HCT116 (cell line): ENCODE measurements at regions of chr10 and their contacts with region 1.

Region 1: GRCh38 chr10:52308251-52309031 is 5.6 kb upstream of the DKK1 start:
- DNase-seq: no peak
- ATAC-seq: peak; percentile 83
- H3K4me3 ChIP-seq: no peak overlapping the region
- H3K27ac ChIP-seq: no peak overlapping the region
- H3K4me1 ChIP-seq: peaks cover 21 to 41% of the 10 kb centered on the region in 2 experiments; a peak in 3 of 4 replicates
- H3K27me3 ChIP-seq: no peaks in the 10 kb centered on the region
- CTCF ChIP-seq: peak; percentile 39 to 83 (median 75)
- POLR2A ChIP-seq: no peak
- RAD21 ChIP-seq: peak; percentile 89

Region 2: GRCh38 chr10:52258799-52259425 is 49.5 kb before region 1 on chr10:
- CTCF ChIA-PET with region 1: no interaction called
- POLR2A ChIA-PET with region 1: no interaction called
- RAD21 ChIA-PET with region 1: no interaction called
- intact Hi-C with region 1: no loop called
- DNase-seq: no peak
- ATAC-seq: no peak
- H3K4me3 ChIP-seq: no peak overlapping the region
- H3K27ac ChIP-seq: no peak overlapping the region
- H3K4me1 ChIP-seq: peaks cover 0 to 17% of the 10 kb centered on the region in 2 experiments; a peak in 3 of 4 replicates
- H3K27me3 ChIP-seq: no peaks in the 10 kb centered on the region
- CTCF ChIP-seq: no peak
- POLR2A ChIP-seq: no peak
- RAD21 ChIP-seq: no peak

Region 3: DNA sequence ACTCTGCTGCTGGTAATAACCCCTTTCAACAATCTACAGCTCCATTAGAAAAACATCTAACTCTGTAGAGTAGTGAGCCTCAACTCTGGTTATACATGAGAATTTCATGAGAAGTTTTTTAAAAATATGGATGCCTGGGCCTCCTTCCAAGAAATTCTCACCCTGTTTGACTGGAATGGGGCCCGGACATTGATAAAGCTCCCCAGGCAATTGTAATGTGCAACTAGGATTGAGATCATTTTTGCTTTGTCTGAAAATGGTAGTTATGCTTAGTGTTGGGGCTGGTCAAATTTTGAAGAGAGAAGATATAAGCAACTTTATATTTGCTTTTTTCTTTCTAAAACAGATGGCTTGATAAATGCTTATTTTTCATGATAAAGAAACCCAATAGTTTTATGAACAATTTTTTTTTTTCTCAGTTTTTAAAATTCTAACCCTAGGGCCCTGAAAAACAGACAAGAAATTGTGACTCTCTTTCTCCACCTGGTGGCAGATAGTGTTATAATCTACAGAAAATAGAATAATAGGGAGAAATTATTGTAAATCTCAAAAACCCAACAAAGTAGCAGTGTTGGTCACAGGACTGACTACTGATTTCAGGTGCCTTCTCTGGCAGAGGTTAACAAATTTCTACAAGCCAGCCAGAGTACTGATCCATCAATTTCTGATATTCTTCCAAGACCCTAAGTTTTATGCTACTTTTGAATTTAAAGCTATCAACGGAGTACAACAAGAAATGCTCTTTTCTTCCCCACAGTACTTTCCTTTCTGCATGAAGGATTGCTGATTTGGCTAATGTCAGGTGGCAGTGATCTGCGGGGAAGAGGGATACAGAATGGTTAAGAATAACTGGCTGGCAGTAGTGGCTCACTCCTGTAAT is 180.4 kb after region 1 on chr10:
- CTCF ChIA-PET with region 1: interaction called, 55 read pairs
- POLR2A ChIA-PET with region 1: interaction called, 33 read pairs
- RAD21 ChIA-PET with region 1: interaction called, 5 to 10 read pairs
- intact Hi-C with region 1: loop called (anchors 1 kb)
- DNase-seq: no peak
- ATAC-seq: peak; percentile 61; the same call in 1 of the 2 replicates
- H3K4me3 ChIP-seq: no peak overlapping the region
- H3K27ac ChIP-seq: peak overlapping the region; percentile 62; the same call in 1 of the 2 replicates
- H3K4me1 ChIP-seq: peaks cover 18 to 48% of the 10 kb centered on the region in 2 experiments
- H3K27me3 ChIP-seq: no peaks in the 10 kb centered on the region
- CTCF ChIP-seq: peak; percentile 30 to 66 (median 63); a peak in 4 of 6 replicates
- POLR2A ChIP-seq: no peak
- RAD21 ChIP-seq: peak; percentile 71

Region 4: GRCh38 chr10:52502237-52502636 is 193.8 kb after region 1 on chr10:
- CTCF ChIA-PET with region 1: no interaction called
- POLR2A ChIA-PET with region 1: no interaction called
- RAD21 ChIA-PET with region 1: no interaction called
- intact Hi-C with region 1: no loop called
- DNase-seq: no peak
- ATAC-seq: no peak
- H3K4me3 ChIP-seq: no peak overlapping the region
- H3K27ac ChIP-seq: no peak overlapping the region
- H3K4me1 ChIP-seq: no peaks in the 10 kb centered on the region
- H3K27me3 ChIP-seq: no peaks in the 10 kb centered on the region
- CTCF ChIP-seq: no peak
- POLR2A ChIP-seq: no peak
- RAD21 ChIP-seq: no peak

Region 5: DNA sequence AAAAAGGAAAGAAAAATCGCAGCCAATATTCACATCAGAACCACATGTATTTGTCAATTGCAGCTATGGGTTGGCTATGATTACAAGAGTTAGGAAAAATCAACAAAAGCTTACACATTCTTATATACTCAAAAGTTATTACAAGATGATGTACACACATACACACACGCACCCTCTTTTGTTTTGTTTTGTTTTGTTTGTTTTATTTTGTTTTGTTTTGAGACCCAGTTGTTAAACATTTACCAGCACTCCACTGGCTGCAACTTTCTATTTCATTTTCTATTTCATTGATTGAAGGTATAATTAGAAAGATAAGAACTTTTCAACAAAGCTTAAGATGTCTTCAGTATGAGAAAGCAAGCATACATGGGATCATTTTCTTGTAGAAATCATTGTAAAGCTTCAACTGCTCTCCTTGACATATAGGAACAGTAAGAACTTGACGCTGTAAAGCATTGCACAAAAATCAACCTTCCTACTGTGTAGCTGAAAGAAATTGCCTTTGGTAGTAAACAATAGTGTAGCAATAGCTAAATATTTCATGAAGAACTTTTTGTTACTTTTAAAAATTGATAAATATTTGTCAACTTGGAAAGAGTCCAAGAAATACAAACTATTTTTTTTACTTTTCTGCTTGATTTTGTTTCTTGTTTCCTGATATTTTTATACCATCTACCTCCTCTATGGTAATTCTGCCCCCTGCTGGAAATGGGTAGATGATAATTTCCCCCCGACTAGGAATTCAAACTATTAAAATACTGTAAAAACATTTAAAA is 258.2 kb after region 1 on chr10:
- CTCF ChIA-PET with region 1: interaction called, 60 read pairs
- POLR2A ChIA-PET with region 1: interaction called, 3 read pairs
- RAD21 ChIA-PET with region 1: interaction called, 6 read pairs
- intact Hi-C with region 1: loop called (anchors 1 kb)
- DNase-seq: peak; percentile 35
- ATAC-seq: 0 out of 2 replicates have a peak, but pooled peaks have one; percentile 60
- H3K4me3 ChIP-seq: no peak overlapping the region
- H3K27ac ChIP-seq: peak overlapping the region; percentile 2; the same call in 1 of the 2 replicates
- H3K4me1 ChIP-seq: peaks cover 3 to 5% of the 10 kb centered on the region in 2 experiments; a peak in 3 of 4 replicates
- H3K27me3 ChIP-seq: no peaks in the 10 kb centered on the region
- CTCF ChIP-seq: peak; percentile 48 to 75 (median 58)
- POLR2A ChIP-seq: no peak
- RAD21 ChIP-seq: peak; percentile 77

Region 6: GRCh38 chr10:52644373-52645186 is 336.1 kb after region 1 on chr10:
- CTCF ChIA-PET with region 1: interaction called, 9 read pairs
- POLR2A ChIA-PET with region 1: no interaction called
- RAD21 ChIA-PET with region 1: interaction called in 1 of 2 experiments, 3 read pairs
- intact Hi-C with region 1: loop called (anchors 2 kb)
- DNase-seq: peak; percentile 51
- ATAC-seq: peak; percentile 86
- H3K4me3 ChIP-seq: no peak overlapping the region
- H3K27ac ChIP-seq: no peak overlapping the region
- H3K4me1 ChIP-seq: no peaks in the 10 kb centered on the region
- H3K27me3 ChIP-seq: no peaks in the 10 kb centered on the region
- CTCF ChIP-seq: peak; percentile 68 to 89 (median 84)
- POLR2A ChIP-seq: no peak
- RAD21 ChIP-seq: peak; percentile 88

Region 7: DNA sequence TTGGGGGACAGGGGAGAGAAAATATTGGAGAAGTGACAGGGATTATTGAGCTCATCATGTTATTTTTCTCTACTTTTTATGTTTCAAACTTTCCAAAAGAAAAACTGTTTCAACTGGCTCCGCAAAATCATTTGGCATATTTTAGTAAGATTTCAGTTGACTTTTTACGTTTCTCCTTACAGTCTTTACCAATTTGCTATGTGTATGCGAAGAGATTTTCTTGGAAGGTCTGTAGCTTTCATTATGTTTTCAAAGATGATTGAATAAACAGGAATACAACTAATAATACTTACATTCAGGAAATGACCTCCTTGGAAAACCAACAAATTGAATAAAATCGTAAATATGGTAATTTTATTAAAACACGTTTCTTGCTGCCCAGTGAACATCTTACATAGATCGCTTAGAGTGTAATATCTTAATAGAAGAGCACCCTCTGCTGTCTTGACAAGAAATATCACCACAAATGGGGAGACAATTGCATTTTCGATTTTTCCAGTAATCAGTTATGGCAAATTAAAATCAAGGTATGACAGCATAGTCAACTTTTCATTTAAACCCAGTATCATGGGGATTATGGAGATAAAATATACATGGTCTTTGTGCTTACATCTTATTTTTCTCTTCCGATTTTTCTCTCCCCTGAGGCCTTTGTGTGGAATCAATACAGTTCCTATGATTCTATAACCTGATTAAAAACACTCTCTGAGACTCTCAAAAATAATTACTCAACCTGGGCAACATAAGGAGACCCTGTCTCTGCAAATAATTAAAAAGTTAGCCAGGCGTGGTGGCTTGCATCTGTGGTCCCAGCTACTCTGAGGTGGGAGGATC is 421.0 kb after region 1 on chr10:
- CTCF ChIA-PET with region 1: interaction called, 3 read pairs
- POLR2A ChIA-PET with region 1: no interaction called
- RAD21 ChIA-PET with region 1: no interaction called
- intact Hi-C with region 1: loop called (anchors 1 kb)
- DNase-seq: peak; percentile 21
- ATAC-seq: peak; percentile 69
- H3K4me3 ChIP-seq: no peak overlapping the region; a peak in 1 of 4 replicates
- H3K27ac ChIP-seq: no peak overlapping the region
- H3K4me1 ChIP-seq: no peaks in the 10 kb centered on the region
- H3K27me3 ChIP-seq: no peaks in the 10 kb centered on the region
- CTCF ChIP-seq: peak; percentile 38 to 77 (median 63); a peak in 4 of 6 replicates
- POLR2A ChIP-seq: no peak
- RAD21 ChIP-seq: peak; percentile 78

Region 8: DNA sequence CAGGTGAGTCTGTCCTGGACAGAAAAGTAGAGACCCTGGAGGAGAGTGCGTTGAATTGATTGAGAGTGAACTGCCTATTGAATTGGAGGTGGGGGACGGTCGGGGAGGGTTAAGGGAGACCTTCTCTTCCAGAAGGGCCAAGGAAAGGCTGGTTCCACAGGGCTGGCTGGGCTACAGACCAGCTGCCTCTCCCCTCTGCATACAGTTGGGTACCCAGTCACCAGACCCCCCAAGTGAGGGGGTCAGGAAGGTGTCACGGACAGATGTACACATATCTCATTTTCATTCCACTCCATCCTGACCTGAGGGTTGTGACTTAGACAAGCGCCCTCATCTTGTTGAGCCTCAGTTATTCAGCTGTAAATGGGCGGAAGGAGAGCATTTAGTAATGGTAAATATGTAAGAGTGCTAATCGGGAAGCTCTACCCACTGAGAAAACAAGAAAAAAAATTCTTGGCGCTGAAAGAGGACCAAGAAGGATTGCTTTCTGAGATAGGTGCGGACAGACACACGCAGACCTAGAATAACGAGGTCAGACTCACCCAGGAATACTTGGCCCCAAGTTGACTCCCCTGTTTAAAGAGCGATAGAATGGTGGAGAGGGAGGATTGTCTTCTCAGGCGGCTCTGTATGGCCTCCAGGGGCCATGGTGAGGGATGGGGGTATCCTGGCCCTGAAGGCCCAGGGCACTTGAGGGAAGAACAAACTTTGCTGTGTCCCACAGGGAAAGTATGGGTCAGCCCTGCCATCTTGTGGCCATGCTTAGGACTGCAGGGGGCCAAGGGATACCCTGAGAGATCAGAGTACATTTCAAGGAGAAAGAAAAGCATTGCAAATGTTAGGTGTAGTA is 471.3 kb after region 1 on chr10:
- CTCF ChIA-PET with region 1: interaction called, 5 read pairs
- POLR2A ChIA-PET with region 1: no interaction called
- RAD21 ChIA-PET with region 1: no interaction called
- intact Hi-C with region 1: loop called (anchors 2 kb)
- DNase-seq: peak; percentile 45
- ATAC-seq: peak; percentile 95
- H3K4me3 ChIP-seq: no peak overlapping the region
- H3K27ac ChIP-seq: no peak overlapping the region
- H3K4me1 ChIP-seq: no peaks in the 10 kb centered on the region
- H3K27me3 ChIP-seq: no peaks in the 10 kb centered on the region
- CTCF ChIP-seq: peak; percentile 57 to 93 (median 90); a peak in 5 of 6 replicates
- POLR2A ChIP-seq: no peak
- RAD21 ChIP-seq: peak; percentile 83